Left cardiac atrium (tissue), 4 donors: ENCODE measurements at regions of chr11 and their contacts with region 1.

Region 1: GRCh38 chr11:17846852-17847453 is 112.4 kb downstream of the KCNC1 start:
- DNase-seq: no peak
- ATAC-seq: peak; percentile 34 to 55

Region 2: GRCh38 chr11:17489751-17490150 is 357.2 kb before region 1 on chr11:
- intact Hi-C with region 1: no loop called
- DNase-seq: no peak
- ATAC-seq: peak in 1 of 2 donors; percentile 74

Region 3: GRCh38 chr11:17734986-17735809 is 111.8 kb before region 1 on chr11:
- intact Hi-C with region 1: no loop called
- DNase-seq: peak; percentile 82
- ATAC-seq: peak; percentile 86 to 87

Region 4: DNA sequence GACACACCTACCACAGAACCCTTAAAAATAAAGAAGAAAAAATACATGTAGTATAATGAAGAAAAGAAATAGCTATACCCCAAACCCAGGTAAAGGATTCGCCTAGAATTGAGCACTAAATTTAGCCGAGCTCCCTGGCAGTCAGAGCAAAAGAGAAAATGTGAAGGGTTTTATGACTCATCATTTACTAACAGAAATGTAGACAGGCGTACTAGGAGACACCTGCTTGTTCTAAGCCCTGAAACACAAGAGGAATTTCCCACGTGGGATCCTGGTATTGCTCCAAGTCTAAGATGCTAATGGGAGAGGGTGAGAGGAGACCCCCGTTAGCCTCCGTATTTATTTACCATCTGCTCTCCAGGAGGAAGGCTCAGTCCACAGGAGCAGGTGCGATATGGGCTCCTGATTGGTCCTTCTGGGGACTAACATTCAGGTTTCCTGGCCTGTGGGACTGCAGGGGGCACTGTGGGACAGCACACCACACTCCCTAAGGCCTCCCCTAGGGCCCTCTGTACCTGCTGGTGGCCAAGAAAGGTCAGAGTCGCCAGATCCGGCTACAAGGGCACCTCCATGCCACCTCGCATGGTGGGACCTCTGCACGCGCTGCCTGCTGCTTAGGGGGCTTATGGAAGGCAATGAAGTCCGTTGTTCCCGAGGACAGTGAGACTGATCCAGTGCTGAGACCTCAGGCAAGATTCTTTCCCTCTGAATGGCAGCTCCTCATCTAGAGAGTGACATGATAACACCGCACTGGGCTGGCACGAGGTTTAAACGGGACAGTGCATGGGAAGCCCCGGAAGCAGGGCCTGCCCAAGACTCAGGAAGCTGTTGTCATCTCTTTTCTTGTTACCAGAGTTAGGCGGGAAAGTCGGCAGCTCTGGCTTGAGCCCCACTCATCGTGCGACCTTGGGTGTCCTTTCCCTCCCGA is 86.6 kb before region 1 on chr11:
- intact Hi-C with region 1: loop called in 1 of 2 experiments (anchors 5 kb)
- DNase-seq: peak; percentile 37
- ATAC-seq: peak; percentile 85 to 88